ENCODE measurements at regions of chr14 and their contacts with region 1.

Region 1: GRCh38 chr14:90602088-90602687 is 205.4 kb downstream of the CALM1 start:
- DNase-seq: no peak
- ATAC-seq: no peak
- H3K4me3 ChIP-seq: no peak overlapping the region
- H3K27ac ChIP-seq: no peak overlapping the region
- H3K4me1 ChIP-seq: peaks cover 9% of the 10 kb centered on the region; the same call in 1 of the 2 replicates
- H3K27me3 ChIP-seq: no peaks in the 10 kb centered on the region
- CTCF ChIP-seq: no peak
- POLR2A ChIP-seq: no peak
- RAD21 ChIP-seq: no peak

Region 2: DNA sequence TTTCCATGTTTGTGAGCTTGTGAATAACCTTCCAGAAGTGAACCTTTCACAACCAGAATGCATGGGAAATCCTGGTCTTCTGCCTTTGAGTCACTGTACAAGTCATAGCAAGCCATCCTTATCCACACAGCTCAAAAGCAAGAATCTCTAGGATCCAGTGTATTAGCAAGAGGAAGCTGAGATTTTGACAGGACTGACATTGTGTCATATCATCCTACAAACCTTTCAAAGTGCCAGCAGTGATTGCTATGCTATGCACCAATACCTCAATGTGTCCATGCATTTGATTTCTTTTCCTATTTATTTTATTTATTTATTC is 257.0 kb before region 1 on chr14:
- CTCF ChIA-PET with region 1: no interaction called
- POLR2A ChIA-PET with region 1: no interaction called
- dilution Hi-C with region 1: no loop called
- in situ Hi-C with region 1: no loop called
- intact Hi-C with region 1: no loop called
- DNase-seq: peak; percentile 11
- ATAC-seq: no peak
- H3K4me3 ChIP-seq: no peak overlapping the region
- H3K27ac ChIP-seq: no peak overlapping the region
- H3K4me1 ChIP-seq: no peaks in the 10 kb centered on the region
- H3K27me3 ChIP-seq: peaks cover 2% of the 10 kb centered on the region
- CTCF ChIP-seq: no peak
- POLR2A ChIP-seq: no peak
- RAD21 ChIP-seq: no peak

Region 3: GRCh38 chr14:90632451-90632850 is 30.3 kb after region 1 on chr14:
- CTCF ChIA-PET with region 1: no interaction called
- POLR2A ChIA-PET with region 1: interaction called, 18 read pairs
- dilution Hi-C with region 1: no loop called
- in situ Hi-C with region 1: no loop called
- intact Hi-C with region 1: no loop called
- DNase-seq: peak; percentile 34
- ATAC-seq: no peak
- H3K4me3 ChIP-seq: no peak overlapping the region
- H3K27ac ChIP-seq: no peak overlapping the region
- H3K4me1 ChIP-seq: peaks cover 5% of the 10 kb centered on the region
- H3K27me3 ChIP-seq: no peaks in the 10 kb centered on the region
- CTCF ChIP-seq: no peak
- POLR2A ChIP-seq: no peak
- RAD21 ChIP-seq: no peak

Measured in IMR-90 (cell line).